ENCODE measurements at regions of chr2 and their contacts with region 1.

Region 1: DNA sequence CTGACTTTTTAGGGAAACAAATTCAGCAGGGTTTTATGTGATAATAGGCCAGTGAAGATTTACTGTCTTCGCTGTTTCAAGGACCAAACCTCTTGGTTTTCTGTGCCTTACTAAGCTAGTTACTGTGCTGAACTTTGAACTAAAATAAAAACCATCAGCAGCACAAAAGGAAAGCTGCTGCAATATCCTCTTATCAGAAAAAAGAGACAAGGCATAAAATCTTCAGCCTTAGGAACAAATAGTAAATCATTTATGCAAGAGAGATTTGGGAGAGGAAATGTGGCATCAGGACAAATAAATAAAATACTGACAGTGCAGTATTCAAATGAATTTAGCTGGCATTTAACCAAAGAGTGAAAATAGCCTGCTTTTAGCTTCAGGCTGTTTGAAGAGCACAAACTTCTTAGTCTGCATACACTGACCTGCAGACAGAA is 64.1 kb upstream of the EHBP1 start:
- DNase-seq: no peak
- H3K4me3 ChIP-seq: no peak overlapping the region
- H3K27ac ChIP-seq: peak overlapping the region in 2 of 4 donors; percentile 18 to 20
- H3K4me1 ChIP-seq: peaks cover 6 to 25% (median 10%) of the 10 kb centered on the region in 4 donors
- H3K27me3 ChIP-seq: no peaks in the 10 kb centered on the region
- CTCF ChIP-seq: no peak
- EP300 ChIP-seq: no peak
- POLR2A ChIP-seq: no peak

Region 2: DNA sequence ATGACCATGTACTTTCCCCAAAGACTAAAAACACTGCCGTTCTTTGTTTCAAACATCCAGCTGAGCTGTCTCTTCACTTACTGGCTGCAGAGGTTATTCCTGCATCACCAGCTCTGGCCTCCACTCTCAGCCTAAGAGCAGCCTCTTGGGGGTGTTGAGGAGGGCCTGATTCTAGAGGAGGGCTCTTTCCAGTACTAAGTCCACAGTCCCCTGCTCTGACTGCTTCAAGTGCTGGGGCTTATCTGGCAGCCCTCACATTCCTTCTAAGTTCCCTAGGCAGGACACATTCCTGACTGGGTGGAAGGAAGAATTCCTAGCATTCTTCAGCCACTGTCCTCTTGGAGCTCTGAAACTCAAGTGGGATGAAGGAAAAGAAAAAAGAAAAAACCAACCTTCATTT is 31.2 kb after region 1 on chr2:
- in situ Hi-C with region 1: no loop called
- intact Hi-C with region 1: loop called (anchors 1 kb)
- DNase-seq: no peak
- H3K4me3 ChIP-seq: no peak overlapping the region
- H3K27ac ChIP-seq: peak overlapping the region in 3 of 4 donors; percentile 26 to 46 (median 31)
- H3K4me1 ChIP-seq: peaks cover 0 to 4% (median 2%) of the 10 kb centered on the region in 4 donors
- H3K27me3 ChIP-seq: no peaks in the 10 kb centered on the region
- CTCF ChIP-seq: no peak
- EP300 ChIP-seq: no peak
- POLR2A ChIP-seq: no peak

Region 3: DNA sequence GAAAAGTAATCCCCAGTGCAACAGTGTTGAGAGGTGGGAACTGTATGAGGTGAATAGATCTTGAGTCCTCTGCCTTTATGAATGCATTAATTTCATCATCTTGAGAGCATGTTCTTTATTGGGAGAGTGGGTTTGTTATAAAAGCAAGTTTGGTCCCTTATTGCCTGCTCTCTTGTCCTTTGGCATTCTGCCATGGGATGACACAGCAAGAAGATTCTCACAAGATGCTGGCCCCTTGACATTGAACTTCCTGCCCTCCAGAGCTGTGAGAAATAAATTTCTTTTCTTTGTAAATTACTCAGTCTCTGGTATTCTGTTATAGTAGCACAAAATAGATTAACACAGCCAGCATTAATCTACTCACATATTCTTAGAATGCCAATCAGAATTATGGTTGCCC is 172.7 kb after region 1 on chr2:
- in situ Hi-C with region 1: no loop called
- intact Hi-C with region 1: no loop called
- DNase-seq: no peak
- H3K4me3 ChIP-seq: no peak overlapping the region
- H3K27ac ChIP-seq: no peak overlapping the region
- H3K4me1 ChIP-seq: peaks cover 0 to 8% (median 0%) of the 10 kb centered on the region in 4 donors
- H3K27me3 ChIP-seq: no peaks in the 10 kb centered on the region
- CTCF ChIP-seq: no peak
- EP300 ChIP-seq: no peak
- POLR2A ChIP-seq: no peak

Region 4: DNA sequence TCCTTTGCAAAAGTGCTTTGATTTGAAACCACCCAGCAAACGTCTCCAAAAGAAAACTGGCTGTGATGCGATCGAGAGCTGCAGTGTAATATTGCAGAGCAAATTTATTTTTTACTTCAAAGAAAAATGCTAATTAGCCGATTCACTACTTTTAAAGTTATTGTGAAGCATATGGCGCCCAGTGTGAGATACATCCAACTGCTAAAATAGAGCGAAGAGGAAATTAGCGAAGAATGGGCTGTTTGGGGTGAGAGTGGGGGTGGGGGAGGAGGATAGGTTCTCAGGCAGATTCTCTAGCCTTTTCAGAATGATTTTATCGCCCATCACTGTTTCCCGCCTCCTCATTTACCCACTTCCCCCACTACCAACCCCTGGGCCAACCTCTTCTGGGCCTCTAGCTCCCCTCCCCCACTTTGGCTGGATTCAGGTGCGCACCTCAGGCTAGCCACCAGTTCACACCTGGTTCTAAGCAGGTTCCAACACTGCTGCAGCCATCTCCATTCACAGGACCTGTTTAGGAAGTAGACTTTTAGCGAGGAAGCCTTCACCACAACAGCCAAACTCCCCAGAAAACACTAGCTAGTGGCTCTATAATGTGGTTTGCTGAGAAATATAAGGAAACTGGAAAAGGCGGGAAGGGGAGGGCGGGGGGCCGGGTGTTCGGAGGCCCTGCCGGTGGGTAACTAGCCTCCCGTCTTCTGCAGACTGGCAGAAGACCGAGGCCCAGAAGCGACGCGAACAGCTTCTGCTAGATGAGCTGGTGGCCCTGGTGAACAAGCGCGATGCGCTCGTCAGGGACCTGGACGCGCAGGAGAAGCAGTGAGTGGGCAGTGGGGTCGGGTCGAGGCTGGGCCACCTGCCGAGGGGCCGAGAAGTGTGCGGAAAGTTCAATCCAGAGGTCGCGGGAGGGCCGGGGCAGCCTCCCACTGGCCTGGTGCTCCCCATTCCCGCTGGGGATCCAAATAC is 403.2 kb after region 1 on chr2:
- in situ Hi-C with region 1: no loop called
- intact Hi-C with region 1: no loop called
- DNase-seq: no peak
- H3K4me3 ChIP-seq: no peak overlapping the region
- H3K27ac ChIP-seq: no peak overlapping the region
- H3K4me1 ChIP-seq: peaks cover 8 to 28% (median 25%) of the 10 kb centered on the region in 4 donors
- H3K27me3 ChIP-seq: peaks cover 57% of the 10 kb centered on the region
- CTCF ChIP-seq: no peak
- EP300 ChIP-seq: no peak
- POLR2A ChIP-seq: no peak

Region 5: GRCh38 chr2:64410671-64411070 is 1769.2 kb after region 1 on chr2:
- in situ Hi-C with region 1: no loop called
- intact Hi-C with region 1: loop called (anchors 5 kb)
- DNase-seq: no peak
- H3K4me3 ChIP-seq: no peak overlapping the region
- H3K27ac ChIP-seq: no peak overlapping the region
- H3K4me1 ChIP-seq: peaks cover 5 to 22% (median 16%) of the 10 kb centered on the region in 4 donors
- H3K27me3 ChIP-seq: no peaks in the 10 kb centered on the region
- CTCF ChIP-seq: no peak
- EP300 ChIP-seq: no peak
- POLR2A ChIP-seq: no peak